Astrocyte of the cerebellum (primary cell): ENCODE measurements at regions of chr2 and their contacts with region 1.

Region 1: GRCh38 chr2:28583899-28584553 is 88.2 kb downstream of the PLB1 start:
- DNase-seq: peak; percentile 70
- H3K4me3 ChIP-seq: no peak overlapping the region
- CTCF ChIP-seq: no peak

Region 2: GRCh38 chr2:27441958-27442919 is 1141.8 kb before region 1 on chr2 and contains the start of gene KRTCAP3:
- in situ Hi-C with region 1: no loop called
- DNase-seq: no peak
- H3K4me3 ChIP-seq: no peak within 1 kb of the TSS
- CTCF ChIP-seq: peak; percentile 13

Region 3: DNA sequence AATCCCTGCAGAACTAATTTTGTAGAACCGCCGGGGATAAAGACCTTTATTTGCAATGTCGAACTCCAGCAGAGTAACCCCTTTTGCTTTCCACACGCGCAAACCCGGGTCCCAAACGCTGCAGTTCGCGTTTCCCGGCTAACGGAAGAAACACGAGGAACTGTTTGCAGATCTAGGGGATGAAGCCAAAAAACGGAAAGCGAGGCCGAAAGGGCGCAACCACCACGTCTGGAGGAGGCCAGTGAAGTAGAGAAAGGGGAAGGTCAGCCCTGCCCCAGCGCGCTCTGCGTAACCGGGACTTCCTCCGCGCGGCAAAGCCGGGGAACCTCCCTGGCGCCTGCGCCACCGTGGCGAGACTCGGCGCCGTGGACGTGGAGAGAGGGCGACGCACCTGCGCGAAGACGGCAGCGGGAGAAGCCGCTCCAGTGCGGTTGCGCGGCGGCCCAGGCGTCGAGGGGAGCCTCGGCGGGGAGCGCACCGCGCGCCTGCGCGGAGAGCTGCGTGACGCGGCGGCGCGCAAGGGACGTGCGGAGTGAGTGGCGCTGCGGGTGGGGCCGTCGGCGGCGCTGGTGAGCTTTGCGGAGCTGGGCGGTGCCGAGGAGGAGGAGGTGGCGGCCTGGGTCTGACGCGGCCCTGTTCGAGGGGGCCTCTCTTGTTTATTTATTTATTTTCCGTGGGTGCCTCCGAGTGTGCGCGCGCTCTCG is 167.4 kb after region 1 on chr2 and contains the start of gene PPP1CB:
- in situ Hi-C with region 1: loop called (anchors 10 kb)
- DNase-seq: peak; percentile 84
- H3K4me3 ChIP-seq: peak within 1 kb of the TSS; percentile 82
- CTCF ChIP-seq: peak; percentile 13